WTC11 (cell line): ENCODE measurements at regions of chr14 and their contacts with region 1.

Region 1: DNA sequence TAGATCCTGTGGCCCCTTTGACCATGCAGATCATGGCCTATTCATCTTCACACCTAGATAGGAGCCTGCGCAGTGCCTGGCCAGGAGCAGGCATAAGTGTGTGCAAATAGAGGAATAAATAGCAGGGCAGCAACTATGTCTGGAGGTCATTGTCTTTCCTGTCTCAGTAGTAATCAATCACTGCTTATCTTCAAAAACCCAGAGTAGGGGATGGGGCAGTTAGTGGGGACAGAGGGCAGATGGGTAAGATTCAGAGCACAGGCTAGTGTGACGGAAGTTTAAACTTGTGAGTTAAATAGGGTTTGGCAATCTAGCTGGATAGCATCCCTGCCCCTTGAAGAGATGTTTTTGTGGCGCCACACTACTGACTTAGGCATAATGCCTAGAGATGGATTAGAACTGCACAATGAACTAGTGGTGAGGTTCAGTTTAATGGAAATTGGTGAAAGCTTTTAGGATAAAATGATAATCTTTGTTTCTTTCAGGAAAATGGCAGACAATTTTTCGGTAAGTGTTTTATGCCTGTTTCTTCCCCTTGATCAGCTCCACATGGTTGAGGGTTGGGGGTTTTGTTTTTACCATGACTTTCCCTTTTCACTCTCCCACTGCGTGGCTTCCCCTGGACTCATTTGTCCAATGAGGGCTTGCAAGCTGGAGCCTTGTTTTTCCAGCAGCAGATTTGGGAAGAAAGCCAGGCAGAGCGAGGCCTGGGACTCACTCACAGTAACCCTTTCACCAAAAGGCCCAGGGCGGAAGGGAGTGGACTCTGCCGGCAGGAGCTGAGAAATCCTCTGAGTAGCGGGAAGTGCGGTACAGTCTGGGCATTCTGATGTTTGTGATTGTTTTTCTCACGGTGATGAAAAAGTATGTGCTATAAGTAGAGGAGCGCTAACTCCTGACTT is 8.1 kb downstream of the LGALS3 start:
- DNase-seq: no peak
- ATAC-seq: no peak
- H3K4me3 Mint-ChIP-seq: no peak overlapping the region
- H3K27ac Mint-ChIP-seq: no peak overlapping the region
- H3K4me1 Mint-ChIP-seq: no peaks in the 10 kb centered on the region
- H3K27me3 Mint-ChIP-seq: no peaks in the 10 kb centered on the region
- CTCF ChIP-seq: no peak

Region 2: GRCh38 chr14:55102141-55102621 is 35.0 kb before region 1 on chr14:
- CTCF ChIA-PET with region 1: interaction called, 11 read pairs
- POLR2A ChIA-PET with region 1: interaction called, 3 read pairs
- DNase-seq: no peak
- ATAC-seq: peak; percentile 57
- H3K4me3 Mint-ChIP-seq: no peak overlapping the region
- H3K27ac Mint-ChIP-seq: peak overlapping the region; percentile 93
- H3K4me1 Mint-ChIP-seq: peaks cover 28% of the 10 kb centered on the region
- H3K27me3 Mint-ChIP-seq: no peaks in the 10 kb centered on the region; the same call in 1 of the 2 replicates
- CTCF ChIP-seq: no peak